ENCODE measurements at regions of chr11 and their contacts with region 1.

Region 1: GRCh38 chr11:3854977-3855807 is at the start of gene STIM1:
- DNase-seq: peak; percentile 97
- ATAC-seq: peak; percentile 95
- total RNA-seq, gene STIM1: 27.5 TPM

Region 2: GRCh38 chr11:3947061-3947460 is 91.9 kb after region 1 on chr11:
- intact Hi-C with region 1: loop called (anchors 10 kb)
- DNase-seq: no peak
- ATAC-seq: peak; percentile 91

Region 3: GRCh38 chr11:3959015-3959919 is 104.1 kb after region 1 on chr11:
- intact Hi-C with region 1: no loop called
- DNase-seq: no peak
- ATAC-seq: no peak

Region 4: DNA sequence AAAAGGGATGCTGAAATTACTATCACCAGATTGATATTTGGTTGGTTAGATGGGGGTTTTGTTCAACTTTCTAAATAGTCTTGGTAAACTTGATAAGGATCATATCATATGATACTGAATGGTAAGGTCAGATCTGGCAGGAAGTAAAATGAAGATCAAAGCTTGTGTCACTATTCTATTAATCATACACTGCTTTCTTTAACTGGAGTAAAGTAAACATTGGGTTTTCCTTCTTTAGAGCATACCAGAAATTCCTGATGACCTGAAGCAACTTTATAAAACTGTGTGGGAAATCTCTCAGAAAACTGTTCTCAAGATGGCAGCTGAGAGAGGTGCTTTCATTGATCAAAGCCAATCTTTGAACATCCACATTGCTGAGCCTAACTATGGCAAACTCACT is 279.7 kb after region 1 on chr11:
- intact Hi-C with region 1: no loop called
- DNase-seq: no peak
- ATAC-seq: no peak

Measured in Right ventricle myocardium superior (tissue), 1 donor.